ENCODE measurements at regions of chr2 and their contacts with region 1.

Region 1: GRCh38 chr2:200483729-200484198 is 26.1 kb downstream of the KCTD18 start:
- DNase-seq: no peak
- ATAC-seq: no peak
- H3K4me3 ChIP-seq: no peak overlapping the region
- H3K4me3 Mint-ChIP-seq: no peak overlapping the region
- H3K27ac ChIP-seq: no peak overlapping the region
- H3K27ac Mint-ChIP-seq: no peak overlapping the region
- H3K4me1 ChIP-seq: peaks cover 0 to 4% of the 10 kb centered on the region in 2 donors
- H3K4me1 Mint-ChIP-seq: peaks cover 0 to 24% (median 4%) of the 10 kb centered on the region in 7 donors
- H3K27me3 ChIP-seq: no peaks in the 10 kb centered on the region
- H3K27me3 Mint-ChIP-seq: no peaks in the 10 kb centered on the region

Region 2: DNA sequence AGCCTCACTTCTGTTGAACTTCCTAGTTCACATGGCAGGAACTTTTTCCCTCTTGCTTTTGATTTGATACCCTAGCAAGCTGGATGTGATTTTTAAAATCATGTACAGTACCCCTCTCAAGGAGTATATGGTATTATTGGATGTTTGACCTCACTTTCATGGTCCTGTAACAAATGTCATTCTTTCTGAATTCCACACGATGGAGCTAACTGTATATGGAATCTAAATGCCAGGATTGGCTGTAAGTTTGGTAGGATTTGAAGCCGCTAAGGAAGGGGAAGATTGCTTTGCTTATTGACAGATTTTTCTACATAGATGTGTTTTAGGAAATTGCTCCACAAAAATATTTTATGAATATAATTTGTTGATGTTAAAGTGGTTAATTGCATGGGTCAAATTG is 510.1 kb before region 1 on chr2:
- CTCF ChIA-PET with region 1: interaction called, 37 read pairs
- POLR2A ChIA-PET with region 1: no interaction called
- intact Hi-C with region 1: no loop called
- DNase-seq: no peak
- ATAC-seq: no peak
- H3K4me3 ChIP-seq: no peak overlapping the region
- H3K4me3 Mint-ChIP-seq: no peak overlapping the region
- H3K27ac ChIP-seq: no peak overlapping the region
- H3K27ac Mint-ChIP-seq: peak overlapping the region in 1 of 9 donors; percentile 46
- H3K4me1 ChIP-seq: no peaks in the 10 kb centered on the region
- H3K4me1 Mint-ChIP-seq: peaks cover 0 to 15% (median 0%) of the 10 kb centered on the region in 7 donors
- H3K27me3 ChIP-seq: no peaks in the 10 kb centered on the region
- H3K27me3 Mint-ChIP-seq: no peaks in the 10 kb centered on the region

Region 3: GRCh38 chr2:200306196-200306930 is 177.4 kb before region 1 on chr2 and contains the start of gene SPATS2L:
- CTCF ChIA-PET with region 1: no interaction called
- POLR2A ChIA-PET with region 1: no interaction called
- intact Hi-C with region 1: loop called in 1 of 2 experiments (anchors 2 kb)
- DNase-seq: peak in 7 of 9 donors; percentile 12 to 36 (median 22)
- ATAC-seq: peak; percentile 58
- H3K4me3 ChIP-seq: peak within 1 kb of the TSS; percentile 63
- H3K4me3 Mint-ChIP-seq: peak within 1 kb of the TSS; percentile 86 to 96 (median 92)
- H3K27ac ChIP-seq: no peak within 1 kb of the TSS
- H3K27ac Mint-ChIP-seq: peak within 1 kb of the TSS in 7 of 9 donors; percentile 14 to 88 (median 63)
- H3K4me1 ChIP-seq: peaks cover 0 to 4% of the 10 kb centered on the region in 2 donors
- H3K4me1 Mint-ChIP-seq: peaks cover 7 to 32% (median 11%) of the 10 kb centered on the region in 7 donors
- H3K27me3 ChIP-seq: no peaks in the 10 kb centered on the region
- H3K27me3 Mint-ChIP-seq: peaks cover 0 to 58% (median 16%) of the 10 kb centered on the region in 5 donors
- total RNA-seq, gene SPATS2L: 2.3 to 51.9 (median 3.5) TPM

Region 4: DNA sequence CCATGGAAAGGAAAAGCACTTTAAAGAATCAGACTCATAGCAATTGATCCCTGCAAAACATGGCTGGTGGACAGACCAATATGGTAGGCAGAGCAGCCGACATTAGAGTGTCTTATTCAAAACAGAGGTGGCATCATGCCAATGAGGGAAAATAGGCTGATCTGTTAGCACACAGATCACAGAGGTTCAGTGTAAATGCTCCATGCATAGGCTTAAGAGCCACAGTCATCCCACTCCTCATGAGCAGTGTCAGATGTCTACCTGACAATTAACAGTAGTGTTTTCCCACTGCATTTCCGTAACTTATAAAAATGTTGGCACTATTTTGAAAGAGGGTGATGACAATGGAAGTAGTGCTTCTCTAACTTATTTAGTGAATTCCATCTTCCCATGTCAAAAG is 90.6 kb before region 1 on chr2:
- CTCF ChIA-PET with region 1: no interaction called
- POLR2A ChIA-PET with region 1: no interaction called
- intact Hi-C with region 1: no loop called
- DNase-seq: no peak
- ATAC-seq: no peak
- H3K4me3 ChIP-seq: no peak overlapping the region
- H3K4me3 Mint-ChIP-seq: no peak overlapping the region
- H3K27ac ChIP-seq: no peak overlapping the region
- H3K27ac Mint-ChIP-seq: no peak overlapping the region
- H3K4me1 ChIP-seq: no peaks in the 10 kb centered on the region
- H3K4me1 Mint-ChIP-seq: peaks cover 0 to 12% (median 0%) of the 10 kb centered on the region in 7 donors
- H3K27me3 ChIP-seq: no peaks in the 10 kb centered on the region
- H3K27me3 Mint-ChIP-seq: no peaks in the 10 kb centered on the region

Region 5: GRCh38 chr2:200471324-200471848 is 12.4 kb before region 1 on chr2:
- CTCF ChIA-PET with region 1: interaction called, 20 read pairs
- POLR2A ChIA-PET with region 1: no interaction called
- intact Hi-C with region 1: loop called in 1 of 2 experiments (anchors 1 kb)
- DNase-seq: peak in 7 of 9 donors; percentile 20 to 47 (median 39)
- ATAC-seq: peak; percentile 56
- H3K4me3 ChIP-seq: no peak overlapping the region
- H3K4me3 Mint-ChIP-seq: peak overlapping the region in 7 of 10 donors; percentile 1 to 81 (median 46)
- H3K27ac ChIP-seq: no peak overlapping the region
- H3K27ac Mint-ChIP-seq: peak overlapping the region in 3 of 9 donors; percentile 32 to 64 (median 44)
- H3K4me1 ChIP-seq: peaks cover 20 to 30% of the 10 kb centered on the region in 2 donors
- H3K4me1 Mint-ChIP-seq: peaks cover 23 to 41% (median 35%) of the 10 kb centered on the region in 7 donors
- H3K27me3 ChIP-seq: no peaks in the 10 kb centered on the region
- H3K27me3 Mint-ChIP-seq: no peaks in the 10 kb centered on the region